HepG2 (cell line): ENCODE measurements at regions of chr6 and their contacts with region 1.

Region 1: GRCh38 chr6:30238174-30238795 is 25.1 kb upstream of the TRIM26 start:
- DNase-seq: peak; percentile 60
- ATAC-seq: peak; percentile 93
- H3K4me3 ChIP-seq: no peak overlapping the region
- H3K27ac ChIP-seq: no peak overlapping the region
- H3K4me1 ChIP-seq: no peaks in the 10 kb centered on the region
- H3K27me3 ChIP-seq: peaks cover 1 to 19% of the 10 kb centered on the region in 2 experiments
- CTCF ChIP-seq: peak; percentile 86
- EP300 ChIP-seq: no peak
- POLR2A ChIP-seq: no peak
- RAD21 ChIP-seq: peak; percentile 77

Region 2: DNA sequence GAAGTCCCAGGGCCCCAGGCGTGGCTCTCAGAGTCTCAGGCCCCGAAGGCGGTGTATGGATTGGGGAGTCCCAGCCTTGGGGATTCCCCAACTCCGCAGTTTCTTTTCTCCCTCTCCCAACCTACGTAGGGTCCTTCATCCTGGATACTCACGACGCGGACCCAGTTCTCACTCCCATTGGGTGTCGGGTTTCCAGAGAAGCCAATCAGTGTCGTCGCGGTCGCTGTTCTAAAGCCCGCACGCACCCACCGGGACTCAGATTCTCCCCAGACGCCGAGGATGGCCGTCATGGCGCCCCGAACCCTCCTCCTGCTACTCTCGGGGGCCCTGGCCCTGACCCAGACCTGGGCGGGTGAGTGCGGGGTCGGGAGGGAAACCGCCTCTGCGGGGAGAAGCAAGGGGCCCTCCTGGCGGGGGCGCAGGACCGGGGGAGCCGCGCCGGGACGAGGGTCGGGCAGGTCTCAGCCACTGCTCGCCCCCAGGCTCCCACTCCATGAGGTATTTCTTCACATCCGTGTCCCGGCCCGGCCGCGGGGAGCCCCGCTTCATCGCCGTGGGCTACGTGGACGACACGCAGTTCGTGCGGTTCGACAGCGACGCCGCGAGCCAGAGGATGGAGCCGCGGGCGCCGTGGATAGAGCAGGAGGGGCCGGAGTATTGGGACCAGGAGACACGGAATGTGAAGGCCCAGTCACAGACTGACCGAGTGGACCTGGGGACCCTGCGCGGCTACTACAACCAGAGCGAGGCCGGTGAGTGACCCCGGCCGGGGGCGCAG is 295.8 kb before region 1 on chr6 and contains the start of gene HLA-A:
- CTCF ChIA-PET with region 1: no interaction called
- POLR2A ChIA-PET with region 1: no interaction called
- in situ Hi-C with region 1: no loop called
- intact Hi-C with region 1: no loop called
- DNase-seq: peak; percentile 94
- ATAC-seq: peak; percentile 98
- H3K4me3 ChIP-seq: peak within 1 kb of the TSS; percentile 77 to 82 (median 80)
- H3K27ac ChIP-seq: peak within 1 kb of the TSS; percentile 60
- H3K4me1 ChIP-seq: peaks cover 28% of the 10 kb centered on the region
- H3K27me3 ChIP-seq: no peaks in the 10 kb centered on the region
- CTCF ChIP-seq: no peak
- EP300 ChIP-seq: no peak
- POLR2A ChIP-seq: peak; percentile 87 to 90
- RAD21 ChIP-seq: no peak
- total RNA-seq, gene HLA-A: 131 and 345 TPM in 2 replicates

Region 3: GRCh38 chr6:30357678-30358540 is 119.6 kb after region 1 on chr6:
- CTCF ChIA-PET with region 1: no interaction called
- POLR2A ChIA-PET with region 1: no interaction called
- in situ Hi-C with region 1: no loop called
- intact Hi-C with region 1: loop called (anchors 5 kb)
- DNase-seq: peak; percentile 60
- ATAC-seq: peak; percentile 84
- H3K4me3 ChIP-seq: peak overlapping the region in 1 of 3 experiments; percentile 42; a peak in 1 of 6 replicates
- H3K27ac ChIP-seq: no peak overlapping the region
- H3K4me1 ChIP-seq: no peaks in the 10 kb centered on the region
- H3K27me3 ChIP-seq: peaks cover 6 to 52% of the 10 kb centered on the region in 2 experiments; a peak in 4 of 5 replicates
- CTCF ChIP-seq: peak; percentile 64
- EP300 ChIP-seq: no peak
- POLR2A ChIP-seq: no peak
- RAD21 ChIP-seq: 0 out of 2 replicates have a peak, but pooled peaks have one; percentile 35